ENCODE measurements at regions of chr1 and their contacts with region 1.

Region 1: DNA sequence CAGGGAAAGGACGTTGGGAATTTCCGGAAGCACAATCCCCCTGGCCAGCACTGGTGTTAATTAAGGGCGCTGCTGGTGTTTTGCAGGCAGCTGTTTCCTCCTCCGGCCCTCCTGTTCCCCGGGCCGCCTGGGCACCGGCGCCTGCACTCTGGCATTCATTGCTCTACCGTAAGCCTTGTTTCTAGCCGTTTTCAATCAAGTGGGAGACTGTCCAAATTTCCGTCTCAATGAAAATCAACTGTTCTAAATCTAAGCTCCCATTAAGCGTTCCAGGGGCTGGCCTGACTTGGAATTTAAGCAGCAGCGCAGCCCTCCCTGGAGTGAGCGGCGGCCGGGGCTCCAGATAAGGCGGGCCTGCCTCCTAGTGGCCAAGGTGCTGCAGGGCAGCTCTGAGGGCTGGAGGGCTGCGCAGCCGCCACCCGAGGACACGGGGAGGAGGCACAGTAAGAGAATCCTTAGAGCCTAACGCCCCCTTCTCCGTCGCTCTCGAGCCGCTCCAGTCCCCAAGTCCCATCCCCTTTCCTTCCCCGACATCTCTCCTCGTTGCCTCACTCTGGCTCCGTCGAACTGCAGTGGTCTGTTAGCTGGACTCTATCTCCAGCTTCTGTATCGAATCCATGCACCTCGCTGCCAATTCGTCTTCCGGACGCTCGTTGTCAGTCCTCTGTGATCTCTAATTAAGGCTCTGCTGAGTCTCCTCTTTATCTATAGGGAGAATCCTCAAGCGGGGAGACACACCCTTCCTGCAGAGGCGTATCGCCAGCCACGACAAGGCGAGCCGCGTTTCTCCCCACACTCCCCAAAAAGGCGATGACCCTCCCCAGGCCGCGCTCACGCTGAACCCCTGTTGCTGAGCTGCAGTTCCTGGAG is 57.8 kb upstream of the LRRC8D start:
- DNase-seq: peak; percentile 91
- H3K4me3 Mint-ChIP-seq: peak overlapping the region; percentile 72
- H3K27ac Mint-ChIP-seq: peak overlapping the region; percentile 80
- H3K4me1 Mint-ChIP-seq: peaks cover 46% of the 10 kb centered on the region
- H3K27me3 Mint-ChIP-seq: no peaks in the 10 kb centered on the region

Region 2: DNA sequence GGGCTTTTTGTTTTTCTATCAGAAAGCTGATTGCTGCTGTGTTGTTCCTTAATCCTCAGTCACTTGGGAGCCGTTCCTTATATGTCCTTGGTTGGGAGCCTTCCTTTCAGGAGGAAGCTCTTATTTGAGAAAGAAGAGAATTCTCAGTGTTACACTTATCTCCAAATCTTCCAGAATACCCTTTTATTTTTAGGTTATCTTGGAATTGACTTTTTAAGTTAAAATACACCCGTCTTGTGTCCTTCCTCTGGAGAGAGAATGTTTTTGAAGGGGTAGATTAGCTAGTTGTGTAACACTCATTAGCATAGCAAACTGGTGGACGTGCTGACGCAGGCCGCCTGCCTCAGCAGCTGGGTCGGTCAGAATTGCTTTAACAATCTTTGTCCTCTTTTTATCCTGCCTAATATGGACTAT is 196.2 kb before region 1 on chr1:
- CTCF ChIA-PET with region 1: no interaction called
- POLR2A ChIA-PET with region 1: no interaction called
- intact Hi-C with region 1: no loop called
- DNase-seq: no peak
- H3K4me3 Mint-ChIP-seq: no peak overlapping the region
- H3K27ac Mint-ChIP-seq: no peak overlapping the region
- H3K4me1 Mint-ChIP-seq: peaks cover 51% of the 10 kb centered on the region
- H3K27me3 Mint-ChIP-seq: no peaks in the 10 kb centered on the region

Region 3: DNA sequence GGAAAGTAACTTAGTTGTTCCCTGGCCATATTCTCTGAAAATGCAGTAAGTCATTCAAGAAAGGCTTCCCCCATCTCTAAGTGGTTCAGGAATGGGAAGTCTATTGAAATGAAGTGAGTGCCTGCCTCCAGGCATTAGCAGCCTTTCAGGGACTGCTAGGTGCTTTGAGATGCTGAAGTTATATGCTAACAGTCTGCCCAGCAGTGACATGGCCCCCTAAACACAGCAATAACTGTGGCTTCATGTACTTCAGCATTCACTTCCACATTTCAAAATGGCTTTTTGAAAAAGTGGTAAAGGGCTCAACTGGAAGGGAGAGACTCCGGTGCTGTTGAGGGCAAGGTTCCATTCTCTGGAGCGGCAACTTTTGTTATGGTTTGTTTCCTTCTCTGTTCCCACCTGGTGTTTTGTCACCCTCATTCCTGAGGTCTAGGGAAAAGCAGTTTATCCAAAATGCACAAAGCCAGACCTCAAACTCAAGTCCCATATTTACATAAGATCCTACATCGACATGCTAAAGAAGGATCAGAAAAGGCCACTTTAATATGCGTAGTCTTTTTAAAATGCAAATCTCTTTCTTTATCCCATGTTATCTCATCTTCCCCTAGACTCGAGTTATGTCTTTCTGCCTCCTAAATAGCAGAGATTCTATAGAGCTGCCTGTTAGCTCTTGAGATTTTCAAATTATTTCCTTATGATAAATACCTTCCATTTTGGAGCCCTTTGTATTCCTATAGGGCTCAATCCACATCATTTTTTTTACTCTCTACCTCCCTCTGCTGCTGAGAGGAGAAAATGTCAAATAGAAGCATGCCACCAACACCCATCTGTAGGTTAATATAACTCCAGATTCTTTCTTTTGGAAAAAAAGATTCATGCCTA is 164.3 kb before region 1 on chr1:
- CTCF ChIA-PET with region 1: interaction called, 30 read pairs
- POLR2A ChIA-PET with region 1: interaction called, 4 read pairs
- intact Hi-C with region 1: loop called (anchors 1 kb)
- DNase-seq: no peak
- H3K4me3 Mint-ChIP-seq: no peak overlapping the region
- H3K27ac Mint-ChIP-seq: peak overlapping the region; percentile 64
- H3K4me1 Mint-ChIP-seq: peaks cover 84% of the 10 kb centered on the region
- H3K27me3 Mint-ChIP-seq: no peaks in the 10 kb centered on the region

Region 4: DNA sequence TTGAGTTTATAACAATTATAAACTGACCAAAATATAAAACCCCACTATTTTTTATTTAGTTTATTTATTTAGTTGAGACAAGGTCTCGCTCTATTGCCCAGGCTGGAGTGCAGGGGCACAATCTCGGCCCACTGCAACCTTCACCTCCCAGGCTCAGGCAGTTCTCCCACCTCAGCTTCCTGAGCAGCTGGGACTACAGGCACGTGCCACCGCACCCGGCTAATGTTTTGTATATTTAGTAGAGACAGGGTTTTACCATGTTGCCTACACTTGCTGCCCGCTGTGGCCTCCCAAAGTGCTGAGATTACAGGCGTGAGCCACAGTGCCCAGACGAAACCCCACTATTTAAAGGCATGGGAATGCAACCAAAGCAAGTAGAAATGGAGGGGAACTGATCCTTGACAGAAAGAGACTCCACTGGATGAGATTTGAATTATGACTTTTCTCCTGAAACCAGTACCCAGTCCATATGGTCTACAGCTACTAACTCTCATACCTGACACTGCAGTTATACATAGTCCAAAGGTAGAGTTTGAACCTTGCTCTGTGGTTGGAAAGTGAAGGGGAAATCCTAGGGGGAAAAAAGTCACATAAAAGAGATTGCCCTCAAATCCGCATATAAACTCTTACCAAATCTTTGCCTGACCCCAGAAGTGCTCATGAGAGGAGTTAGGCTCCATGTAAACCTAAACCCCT is 118.7 kb before region 1 on chr1:
- CTCF ChIA-PET with region 1: interaction called, 21 read pairs
- POLR2A ChIA-PET with region 1: no interaction called
- intact Hi-C with region 1: no loop called
- DNase-seq: no peak
- H3K4me3 Mint-ChIP-seq: no peak overlapping the region
- H3K27ac Mint-ChIP-seq: peak overlapping the region; percentile 74
- H3K4me1 Mint-ChIP-seq: peaks cover 66% of the 10 kb centered on the region
- H3K27me3 Mint-ChIP-seq: no peaks in the 10 kb centered on the region

Region 5: DNA sequence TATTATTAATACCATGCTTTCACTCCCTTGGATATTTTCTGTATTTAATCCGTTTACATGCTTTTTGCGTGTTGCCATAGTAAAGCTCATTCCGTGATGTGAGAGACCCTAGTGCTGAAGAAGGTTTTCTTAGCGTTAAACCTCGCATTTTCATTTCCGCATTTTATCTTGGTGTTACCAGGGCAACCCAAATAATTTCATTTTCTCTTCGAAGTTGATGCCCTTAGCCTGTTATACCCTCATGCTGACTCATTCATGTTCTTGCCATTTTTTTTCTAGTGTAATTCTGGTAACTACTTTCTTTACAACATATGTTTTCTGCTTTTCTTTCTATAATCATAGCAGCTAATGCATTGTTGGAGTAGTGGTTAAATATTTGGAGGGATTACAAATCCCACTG is 92.9 kb before region 1 on chr1:
- CTCF ChIA-PET with region 1: interaction called, 23 read pairs
- POLR2A ChIA-PET with region 1: interaction called, 5 read pairs
- intact Hi-C with region 1: no loop called
- DNase-seq: no peak
- H3K4me3 Mint-ChIP-seq: peak overlapping the region; percentile 53
- H3K27ac Mint-ChIP-seq: peak overlapping the region; percentile 66
- H3K4me1 Mint-ChIP-seq: peaks cover 93% of the 10 kb centered on the region
- H3K27me3 Mint-ChIP-seq: no peaks in the 10 kb centered on the region

Region 6: DNA sequence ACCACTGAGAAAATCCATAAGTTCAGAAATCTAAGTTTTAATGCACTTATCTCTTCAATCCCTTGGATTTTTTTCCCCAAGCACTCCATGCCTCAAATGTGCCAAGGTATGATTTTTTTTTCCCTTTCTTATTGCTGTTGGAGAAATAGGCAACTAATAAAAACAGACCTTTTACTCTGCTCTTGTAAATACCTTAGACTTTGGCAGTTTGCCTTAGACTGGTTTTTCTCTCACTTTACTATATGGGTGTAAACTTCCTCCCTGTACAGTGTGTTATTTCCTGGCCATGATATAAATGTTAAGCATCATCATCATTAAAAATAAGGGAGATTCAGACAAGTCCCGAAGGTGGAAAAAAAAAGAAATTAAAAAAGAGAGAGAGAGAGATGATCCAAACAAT is 64.4 kb before region 1 on chr1:
- CTCF ChIA-PET with region 1: interaction called, 16 read pairs
- POLR2A ChIA-PET with region 1: interaction called, 4 read pairs
- intact Hi-C with region 1: no loop called
- DNase-seq: no peak
- H3K4me3 Mint-ChIP-seq: no peak overlapping the region
- H3K27ac Mint-ChIP-seq: peak overlapping the region; percentile 77
- H3K4me1 Mint-ChIP-seq: peaks cover 90% of the 10 kb centered on the region
- H3K27me3 Mint-ChIP-seq: no peaks in the 10 kb centered on the region

Region 7: DNA sequence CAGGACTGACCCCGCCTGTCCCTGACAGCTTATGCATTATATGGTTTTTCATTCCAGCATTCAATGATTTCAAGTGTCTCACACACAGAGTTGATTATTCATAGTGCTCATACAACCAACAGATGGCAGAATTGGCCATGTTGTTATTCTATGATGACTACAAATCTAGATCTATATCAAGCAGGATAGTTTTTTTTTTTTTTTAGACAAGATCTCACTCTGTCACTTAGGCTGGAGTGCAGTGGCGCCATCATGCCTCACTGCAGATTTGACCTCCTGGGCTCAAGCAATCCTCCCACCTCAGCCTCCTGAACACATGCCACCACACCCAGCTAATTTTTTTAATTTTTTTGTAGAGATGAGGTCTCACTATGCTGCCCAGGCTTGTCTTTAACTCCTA is 17.7 kb after region 1 on chr1:
- CTCF ChIA-PET with region 1: interaction called, 38 read pairs
- POLR2A ChIA-PET with region 1: no interaction called
- intact Hi-C with region 1: loop called (anchors 2 kb)
- DNase-seq: peak; percentile 58
- H3K4me3 Mint-ChIP-seq: peak overlapping the region; percentile 48
- H3K27ac Mint-ChIP-seq: peak overlapping the region; percentile 90
- H3K4me1 Mint-ChIP-seq: peaks cover 43% of the 10 kb centered on the region
- H3K27me3 Mint-ChIP-seq: no peaks in the 10 kb centered on the region

Region 8: DNA sequence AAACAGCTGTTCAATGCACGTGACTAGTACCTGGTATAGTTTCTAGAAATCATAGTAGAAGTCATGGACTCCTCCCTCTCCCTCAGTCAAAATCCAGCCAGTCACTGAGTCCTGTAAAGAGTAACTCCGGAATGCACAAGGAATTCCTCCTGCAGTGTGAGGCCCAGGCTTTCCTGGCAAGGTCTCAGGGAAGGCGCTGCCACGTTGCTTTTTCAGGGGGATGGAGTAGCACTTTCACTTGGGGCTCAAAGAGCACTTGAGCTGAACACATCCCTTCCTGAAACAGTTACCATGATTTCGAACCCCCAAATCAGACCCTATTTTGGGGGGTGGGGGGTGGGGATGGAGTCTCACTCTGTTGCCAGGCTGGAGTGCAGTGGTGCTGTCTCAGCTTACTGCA is 31.4 kb after region 1 on chr1:
- CTCF ChIA-PET with region 1: no interaction called
- POLR2A ChIA-PET with region 1: no interaction called
- intact Hi-C with region 1: no loop called
- DNase-seq: no peak
- H3K4me3 Mint-ChIP-seq: no peak overlapping the region
- H3K27ac Mint-ChIP-seq: no peak overlapping the region
- H3K4me1 Mint-ChIP-seq: no peaks in the 10 kb centered on the region
- H3K27me3 Mint-ChIP-seq: no peaks in the 10 kb centered on the region

Measured in activated CD4-positive, alpha-beta memory T cell treated with anti-CD3 and anti-CD28 coated beads for 36 hours (primary cell).